ENCODE measurements at regions of chr6 and their contacts with region 1.

Region 1: GRCh38 chr6:158853072-158853871 is 34.1 kb upstream of the EZR start:
- DNase-seq: peak; percentile 68
- ATAC-seq: peak; percentile 87
- H3K4me3 Mint-ChIP-seq: no peak overlapping the region
- H3K27ac Mint-ChIP-seq: no peak overlapping the region
- H3K4me1 Mint-ChIP-seq: peaks cover 26% of the 10 kb centered on the region
- H3K27me3 Mint-ChIP-seq: no peaks in the 10 kb centered on the region
- CTCF ChIP-seq: no peak

Region 2: GRCh38 chr6:158826801-158827573 is 26.3 kb before region 1 on chr6:
- CTCF ChIA-PET with region 1: no interaction called
- POLR2A ChIA-PET with region 1: interaction called, 13 read pairs
- intact Hi-C with region 1: loop called (anchors 1 kb)
- DNase-seq: no peak
- ATAC-seq: peak; percentile 87
- H3K4me3 Mint-ChIP-seq: peak overlapping the region; percentile 52
- H3K27ac Mint-ChIP-seq: peak overlapping the region; percentile 93
- H3K4me1 Mint-ChIP-seq: peaks cover 39% of the 10 kb centered on the region
- H3K27me3 Mint-ChIP-seq: no peaks in the 10 kb centered on the region
- CTCF ChIP-seq: no peak

Region 3: GRCh38 chr6:158835616-158836221 is 17.6 kb before region 1 on chr6:
- CTCF ChIA-PET with region 1: no interaction called
- POLR2A ChIA-PET with region 1: interaction called, 12 read pairs
- intact Hi-C with region 1: no loop called
- DNase-seq: no peak
- ATAC-seq: peak; percentile 52
- H3K4me3 Mint-ChIP-seq: no peak overlapping the region
- H3K27ac Mint-ChIP-seq: no peak overlapping the region
- H3K4me1 Mint-ChIP-seq: peaks cover 22% of the 10 kb centered on the region
- H3K27me3 Mint-ChIP-seq: no peaks in the 10 kb centered on the region
- CTCF ChIP-seq: no peak